HCT116 (cell line): ENCODE measurements at regions of chr1 and their contacts with region 1.

Region 1: GRCh38 chr1:64823691-64824476 is 79.0 kb downstream of the RAVER2 start:
- DNase-seq: peak; percentile 46
- ATAC-seq: peak; percentile 69
- H3K4me3 ChIP-seq: no peak overlapping the region
- H3K27ac ChIP-seq: no peak overlapping the region
- H3K4me1 ChIP-seq: 0 out of 4 replicates have a peak, but pooled peaks cover 0 to 3% of the 10 kb centered on the region in 2 experiments
- H3K27me3 ChIP-seq: no peaks in the 10 kb centered on the region
- CTCF ChIP-seq: peak; percentile 61 to 86 (median 82)
- POLR2A ChIP-seq: no peak
- RAD21 ChIP-seq: peak; percentile 92

Region 2: GRCh38 chr1:64268653-64269557 is 555.0 kb before region 1 on chr1:
- CTCF ChIA-PET with region 1: interaction called, 4 read pairs
- POLR2A ChIA-PET with region 1: no interaction called
- RAD21 ChIA-PET with region 1: no interaction called
- intact Hi-C with region 1: loop called (anchors 1 kb)
- DNase-seq: peak; percentile 80
- ATAC-seq: peak; percentile 87
- H3K4me3 ChIP-seq: no peak overlapping the region
- H3K27ac ChIP-seq: no peak overlapping the region
- H3K4me1 ChIP-seq: peaks cover 0 to 2% of the 10 kb centered on the region in 2 experiments; a peak in 2 of 4 replicates
- H3K27me3 ChIP-seq: no peaks in the 10 kb centered on the region
- CTCF ChIP-seq: peak; percentile 54 to 80 (median 63)
- POLR2A ChIP-seq: no peak
- RAD21 ChIP-seq: peak; percentile 94

Region 3: DNA sequence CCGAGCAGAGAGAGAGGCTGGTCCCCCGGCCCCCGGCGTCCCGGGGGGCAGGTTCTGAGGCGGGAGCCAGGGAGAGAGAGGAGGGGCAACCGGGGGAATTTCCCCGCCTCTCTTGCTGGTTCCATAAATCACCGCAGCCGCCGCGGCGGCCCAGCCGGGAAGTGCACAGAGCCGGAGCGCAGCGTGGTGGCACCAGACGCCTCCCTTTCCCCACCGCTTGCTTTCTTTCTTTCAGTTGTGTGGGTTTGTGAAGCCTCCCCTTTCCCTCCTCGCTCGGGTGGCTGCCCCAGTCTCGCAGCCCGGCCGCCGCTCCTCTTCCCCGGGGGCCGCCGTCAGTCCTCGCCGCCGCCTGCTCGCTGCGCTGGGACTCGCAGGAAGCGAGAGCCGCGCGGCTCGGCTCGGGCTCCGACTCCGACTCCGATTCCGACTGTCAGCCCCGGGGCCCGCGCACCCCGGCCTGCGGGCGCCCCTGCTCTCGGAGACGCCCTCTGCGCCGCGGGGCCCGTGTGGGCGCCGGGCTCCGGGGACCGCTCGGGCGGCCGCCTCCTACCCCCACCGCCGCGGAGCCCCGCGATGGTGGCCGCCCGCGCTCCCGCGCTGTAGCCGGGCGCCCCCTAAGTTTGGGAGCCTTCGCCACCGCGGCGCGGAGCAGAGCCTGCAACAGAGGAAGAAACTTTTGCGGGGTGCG is 353.8 kb before region 1 on chr1 and contains the start of gene CACHD1:
- CTCF ChIA-PET with region 1: no interaction called
- POLR2A ChIA-PET with region 1: no interaction called
- RAD21 ChIA-PET with region 1: no interaction called
- intact Hi-C with region 1: loop called (anchors 10 kb)
- DNase-seq: peak; percentile 52
- ATAC-seq: peak; percentile 81
- H3K4me3 ChIP-seq: peak within 1 kb of the TSS; percentile 50 to 78
- H3K27ac ChIP-seq: peak within 1 kb of the TSS; percentile 72
- H3K4me1 ChIP-seq: peaks cover 8 to 19% of the 10 kb centered on the region in 2 experiments; a peak in 3 of 4 replicates
- H3K27me3 ChIP-seq: no peaks in the 10 kb centered on the region
- CTCF ChIP-seq: peak in 1 of 3 experiments; percentile 8; a peak in 1 of 6 replicates
- POLR2A ChIP-seq: peak; percentile 91
- RAD21 ChIP-seq: peak; percentile 45
- total RNA-seq, gene CACHD1: 8.4 TPM

Region 4: GRCh38 chr1:64686828-64687724 is 136.8 kb before region 1 on chr1:
- CTCF ChIA-PET with region 1: no interaction called
- POLR2A ChIA-PET with region 1: no interaction called
- RAD21 ChIA-PET with region 1: no interaction called
- intact Hi-C with region 1: loop called (anchors 1 kb)
- DNase-seq: peak; percentile 43
- ATAC-seq: peak; percentile 79
- H3K4me3 ChIP-seq: no peak overlapping the region
- H3K27ac ChIP-seq: no peak overlapping the region
- H3K4me1 ChIP-seq: no peaks in the 10 kb centered on the region
- H3K27me3 ChIP-seq: no peaks in the 10 kb centered on the region
- CTCF ChIP-seq: peak; percentile 74 to 83 (median 83)
- POLR2A ChIP-seq: no peak
- RAD21 ChIP-seq: peak; percentile 72

Region 5: DNA sequence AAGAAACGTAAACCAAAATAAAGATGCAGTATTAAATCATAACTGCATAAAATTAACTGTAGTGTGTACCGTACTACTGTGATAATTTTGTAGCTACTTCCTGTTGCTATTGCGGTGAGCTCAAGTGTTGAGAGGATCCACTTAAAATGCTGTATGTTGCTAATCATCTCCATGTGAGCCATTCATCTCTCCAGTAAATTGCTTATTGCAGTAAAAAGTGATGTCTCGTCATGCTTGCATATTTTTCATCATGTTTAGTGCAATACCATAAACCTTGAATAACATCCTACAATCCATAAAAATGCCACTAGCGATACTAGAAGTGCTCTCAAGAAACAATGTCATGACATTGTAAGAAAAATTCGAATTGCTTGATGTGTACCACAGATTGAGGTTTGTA is 12.8 kb before region 1 on chr1:
- CTCF ChIA-PET with region 1: no interaction called
- POLR2A ChIA-PET with region 1: no interaction called
- RAD21 ChIA-PET with region 1: no interaction called
- intact Hi-C with region 1: no loop called
- DNase-seq: no peak
- ATAC-seq: no peak
- H3K4me3 ChIP-seq: no peak overlapping the region
- H3K27ac ChIP-seq: no peak overlapping the region
- H3K4me1 ChIP-seq: no peaks in the 10 kb centered on the region
- H3K27me3 ChIP-seq: no peaks in the 10 kb centered on the region
- CTCF ChIP-seq: no peak
- POLR2A ChIP-seq: no peak
- RAD21 ChIP-seq: no peak